Cardiac septum (tissue), 1 donor: ENCODE measurements at regions of chr3 and their contacts with region 1.

Region 1: DNA sequence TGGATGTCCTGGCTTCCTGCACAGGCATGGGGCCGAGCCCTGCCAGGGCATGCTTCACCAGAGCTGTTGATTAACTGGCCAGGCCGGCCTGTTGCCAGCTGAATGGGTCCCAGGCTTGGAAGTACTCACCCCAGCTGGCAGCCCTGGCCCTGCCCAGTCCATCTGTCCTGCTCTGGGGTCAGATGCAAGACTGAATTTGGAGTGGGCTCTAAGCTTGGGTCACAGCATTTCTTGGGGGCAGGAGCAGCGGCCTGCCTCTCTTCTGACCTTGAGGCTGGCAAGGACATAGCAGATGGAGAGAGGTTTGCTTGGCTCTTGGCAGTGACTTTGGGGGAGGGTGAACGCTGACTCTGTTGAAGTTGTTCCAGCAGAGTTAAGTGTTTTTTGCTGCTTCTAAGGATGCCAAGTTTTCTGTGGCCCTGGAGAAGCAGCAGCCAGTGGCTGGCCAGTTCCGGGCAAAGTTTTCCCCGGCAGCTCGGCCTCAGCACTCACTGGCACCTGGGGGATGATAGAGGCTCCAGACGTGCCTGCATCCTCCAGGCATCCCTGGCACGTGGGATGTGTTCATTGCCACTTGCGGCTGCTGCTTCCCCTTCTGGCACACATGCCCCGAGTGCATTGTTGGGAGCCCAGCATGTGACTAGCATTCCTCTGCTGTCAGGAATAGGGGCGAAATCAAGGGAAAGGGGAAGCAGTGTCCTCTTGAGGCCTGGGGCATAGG is 22.9 kb downstream of the PDIA5 start:
- DNase-seq: peak; percentile 88

Region 2: GRCh38 chr3:123152687-123153086 is 62.9 kb after region 1 on chr3:
- intact Hi-C with region 1: loop called (anchors 5 kb)
- DNase-seq: no peak

Region 3: DNA sequence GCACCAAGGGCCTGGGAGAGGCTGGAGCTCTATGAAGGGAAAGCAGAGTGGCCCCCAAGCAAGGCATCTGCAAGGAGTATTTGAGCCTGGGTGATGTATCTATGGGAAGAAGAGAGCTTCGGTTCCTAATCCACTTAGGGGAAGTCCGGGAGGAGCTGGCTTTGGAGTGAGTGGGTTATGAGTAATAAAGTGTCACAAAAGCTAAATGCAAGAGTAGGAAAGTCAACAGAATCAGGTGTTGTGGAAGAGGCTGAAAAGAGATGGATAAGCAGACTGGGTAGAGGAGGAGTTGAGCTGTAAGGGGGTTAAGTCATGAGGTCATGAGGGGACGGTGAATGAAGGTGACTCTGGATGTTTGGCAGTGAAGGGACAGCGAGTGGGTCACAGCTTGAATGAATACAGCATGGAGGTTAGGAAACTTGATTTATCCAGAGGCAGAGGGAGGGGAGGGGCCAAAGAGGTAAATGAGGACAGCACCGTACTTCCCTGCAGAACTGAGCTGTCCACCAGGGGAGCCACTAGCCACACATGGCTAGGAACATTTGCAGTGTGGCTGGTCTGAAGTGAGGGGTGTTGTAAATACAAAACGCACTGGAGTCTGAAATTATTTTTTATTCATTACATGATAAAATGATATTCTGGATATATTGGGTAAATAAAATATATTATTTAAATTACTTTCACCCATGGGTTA is 275.8 kb after region 1 on chr3:
- intact Hi-C with region 1: no loop called
- DNase-seq: peak; percentile 63